ENCODE measurements at regions of chr7 and their contacts with region 1.

Region 1: DNA sequence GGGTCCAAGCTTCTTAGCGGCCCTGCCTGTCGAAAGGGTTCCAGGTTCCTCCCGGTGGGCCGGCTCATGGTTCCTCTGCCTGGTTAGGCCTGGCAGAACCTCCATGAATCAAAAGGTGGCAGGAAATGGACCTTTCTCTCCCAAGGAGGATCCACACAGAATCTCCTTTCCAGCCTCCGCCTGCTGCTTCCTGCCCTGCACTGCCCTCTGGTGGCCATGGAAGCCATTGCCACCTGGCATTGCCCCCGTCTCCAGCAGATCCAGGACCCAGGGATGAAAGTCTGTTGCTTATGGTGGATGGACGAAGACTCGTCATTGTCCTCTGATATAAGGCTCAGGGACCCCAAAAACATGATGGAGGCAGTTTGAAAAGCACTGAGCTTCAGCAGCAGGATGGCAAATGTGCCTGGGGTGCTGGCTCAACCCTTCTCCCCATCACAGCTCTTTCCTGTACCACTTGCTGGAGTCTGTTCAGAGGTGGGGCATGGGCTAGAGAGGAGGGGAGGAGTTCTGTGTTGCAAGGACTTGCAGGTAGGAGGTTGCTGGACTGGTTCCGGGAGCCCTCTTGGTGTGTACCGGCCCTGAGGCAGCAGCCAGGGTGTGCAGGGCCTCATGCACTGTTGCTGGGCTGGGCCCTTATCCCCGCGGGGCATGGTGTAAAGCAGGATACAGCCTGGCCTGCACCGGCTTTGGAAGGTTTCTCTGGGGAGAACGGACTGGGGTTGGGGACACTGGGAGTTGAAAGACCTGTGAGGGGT is 11.3 kb upstream of the INMT start:
- DNase-seq: peak; percentile 40 to 60
- ATAC-seq: peak; percentile 78 to 87
- H3K4me3 ChIP-seq: no peak overlapping the region
- H3K27ac ChIP-seq: no peak overlapping the region
- H3K4me1 ChIP-seq: no peaks in the 10 kb centered on the region
- H3K27me3 ChIP-seq: no peaks in the 10 kb centered on the region
- CTCF ChIP-seq: peak; percentile 90 to 99 (median 95)
- POLR2A ChIP-seq: no peak

Region 2: DNA sequence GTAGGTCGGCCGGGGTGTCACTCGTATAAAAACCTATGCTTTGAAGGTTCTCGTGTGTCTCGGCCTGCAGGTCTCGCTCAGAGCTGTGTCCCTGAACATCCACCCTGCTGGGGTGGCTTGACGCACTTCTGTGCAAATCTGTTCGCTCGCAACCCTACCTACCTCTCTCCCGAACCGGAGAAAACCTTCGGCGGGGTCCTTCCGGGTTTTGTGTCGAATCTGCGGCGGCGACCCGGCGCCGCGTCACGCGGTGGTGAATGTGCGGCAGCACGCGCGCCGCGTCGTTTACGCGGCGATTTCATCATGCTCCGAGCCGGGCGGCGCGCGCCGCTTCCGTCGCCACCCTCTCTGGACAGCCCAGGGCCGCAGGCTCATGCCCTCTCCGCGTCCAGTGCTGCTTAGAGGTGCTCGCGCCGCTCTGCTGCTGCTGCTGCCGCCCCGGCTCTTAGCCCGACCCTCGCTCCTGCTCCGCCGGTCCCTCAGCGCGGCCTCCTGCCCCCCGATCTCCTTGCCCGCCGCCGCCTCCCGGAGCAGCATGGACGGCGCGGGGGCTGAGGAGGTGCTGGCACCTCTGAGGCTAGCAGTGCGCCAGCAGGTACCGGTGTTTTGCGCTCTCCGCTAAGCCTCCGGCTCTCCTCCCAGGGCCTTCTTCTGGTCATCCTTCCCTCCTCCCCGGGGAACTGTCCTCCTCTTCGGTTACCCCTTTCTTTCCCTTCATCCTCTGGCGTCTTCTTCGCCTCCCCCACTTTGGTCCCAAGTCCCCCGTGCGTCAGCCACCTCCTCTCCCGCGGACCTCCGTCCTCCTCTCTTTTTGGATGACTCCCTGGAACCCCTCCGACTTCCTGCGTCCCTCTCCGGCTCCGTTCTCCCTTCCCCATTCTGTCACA is 145.8 kb before region 1 on chr7 and contains the start of gene GARS1:
- in situ Hi-C with region 1: no loop called
- intact Hi-C with region 1: loop called (anchors 5 kb)
- DNase-seq: peak; percentile 76 to 84
- ATAC-seq: peak; percentile 94
- H3K4me3 ChIP-seq: peak within 1 kb of the TSS; percentile 93 to 99 (median 98)
- H3K27ac ChIP-seq: peak within 1 kb of the TSS; percentile 98 to 99 (median 98)
- H3K4me1 ChIP-seq: peaks cover 26 to 27% of the 10 kb centered on the region in 2 donors
- H3K27me3 ChIP-seq: no peaks in the 10 kb centered on the region
- CTCF ChIP-seq: peak in 1 of 5 experiments; percentile 19
- POLR2A ChIP-seq: peak; percentile 92 to 93
- total RNA-seq, gene GARS1: 52.1 to 67.7 (median 60.1) TPM

Region 3: GRCh38 chr7:30625283-30625682 is 115.3 kb before region 1 on chr7:
- in situ Hi-C with region 1: no loop called
- intact Hi-C with region 1: loop called (anchors 5 kb)
- DNase-seq: no peak
- ATAC-seq: no peak
- H3K4me3 ChIP-seq: no peak overlapping the region
- H3K27ac ChIP-seq: no peak overlapping the region
- H3K4me1 ChIP-seq: no peaks in the 10 kb centered on the region
- H3K27me3 ChIP-seq: no peaks in the 10 kb centered on the region
- CTCF ChIP-seq: no peak
- POLR2A ChIP-seq: no peak

Region 4: GRCh38 chr7:30789334-30789711 is 48.7 kb after region 1 on chr7:
- in situ Hi-C with region 1: no loop called
- intact Hi-C with region 1: no loop called
- DNase-seq: peak in 1 of 2 donors; percentile 47
- ATAC-seq: peak; percentile 84 to 86
- H3K4me3 ChIP-seq: no peak overlapping the region
- H3K27ac ChIP-seq: peak overlapping the region in 3 of 4 donors; percentile 14 to 40 (median 28)
- H3K4me1 ChIP-seq: peaks cover 0 to 10% of the 10 kb centered on the region in 2 donors
- H3K27me3 ChIP-seq: no peaks in the 10 kb centered on the region
- CTCF ChIP-seq: no peak
- POLR2A ChIP-seq: no peak